Right cardiac atrium (tissue), 5 donors: ENCODE measurements at regions of chrX and their contacts with region 1.

Region 1: DNA sequence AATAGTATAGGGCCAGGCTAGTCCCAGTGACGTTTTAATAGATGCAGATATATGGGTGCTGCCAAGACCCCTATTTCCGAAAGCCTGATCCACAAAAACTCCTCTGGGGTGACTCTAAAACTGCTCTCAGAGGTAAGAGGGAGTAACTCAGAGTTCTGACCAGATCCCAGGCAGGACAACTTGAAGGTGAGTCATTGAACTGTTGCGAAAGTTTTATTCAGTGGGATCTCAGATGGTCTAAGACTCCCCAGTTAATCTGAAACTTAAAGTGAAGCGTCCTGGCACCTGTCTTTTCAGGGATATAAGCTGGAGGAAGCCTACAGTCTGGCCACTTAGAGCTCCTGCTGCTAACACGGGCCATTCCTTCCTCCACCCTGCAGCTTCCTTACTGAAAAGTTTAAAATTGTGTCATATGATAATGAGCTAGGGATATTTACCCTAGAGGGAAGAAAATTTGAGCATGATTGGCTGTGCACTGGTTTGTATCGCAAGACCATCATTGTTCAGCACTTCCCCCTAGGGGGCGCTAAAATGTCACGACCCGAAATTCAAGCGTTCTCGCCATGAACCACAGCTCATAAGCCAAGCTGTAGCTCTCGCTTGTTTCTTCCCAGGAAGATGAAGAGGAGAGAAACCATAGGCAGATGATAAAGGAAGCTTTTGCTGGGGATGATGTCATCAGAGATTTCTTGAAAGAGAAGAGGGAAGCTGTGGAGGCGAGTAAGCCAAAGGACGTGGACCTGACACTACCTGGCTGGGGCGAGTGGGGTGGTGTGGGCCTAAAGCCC is 19.5 kb downstream of the UTP14A start:
- DNase-seq: peak; percentile 70 to 80 (median 75)
- ATAC-seq: peak; percentile 79 to 81
- H3K4me3 ChIP-seq: no peak overlapping the region
- H3K27ac ChIP-seq: no peak overlapping the region
- H3K4me1 ChIP-seq: no peaks in the 10 kb centered on the region
- H3K27me3 ChIP-seq: no peaks in the 10 kb centered on the region

Region 2: GRCh38 chrX:130024127-130024526 is 98.6 kb after region 1 on chrX:
- intact Hi-C with region 1: loop called in 1 of 4 experiments (anchors 2 kb)
- DNase-seq: peak; percentile 82 to 91 (median 89)
- ATAC-seq: peak; percentile 95 to 96
- H3K4me3 ChIP-seq: no peak overlapping the region
- H3K27ac ChIP-seq: no peak overlapping the region
- H3K4me1 ChIP-seq: peaks cover 4% of the 10 kb centered on the region
- H3K27me3 ChIP-seq: no peaks in the 10 kb centered on the region

Region 3: DNA sequence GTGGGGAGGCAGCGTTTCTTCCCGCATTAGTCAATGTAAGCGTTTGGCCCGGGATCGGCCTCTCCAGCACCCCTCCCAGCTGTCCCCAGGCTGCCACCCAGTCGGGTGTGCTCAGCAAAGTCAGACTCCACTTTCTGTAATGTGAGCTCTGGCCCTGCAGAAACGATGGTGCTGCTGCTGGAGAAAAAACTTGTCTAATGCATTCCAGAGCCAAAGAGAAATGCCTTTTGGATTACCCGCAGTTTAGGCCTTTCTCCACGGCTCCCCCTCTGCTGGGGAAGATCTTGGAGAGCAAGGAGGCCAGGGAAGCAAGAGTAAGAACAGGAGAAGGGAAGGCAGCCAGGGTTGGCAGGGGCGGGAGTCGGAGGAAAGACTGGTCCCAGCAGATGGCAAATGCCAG is 129.6 kb after region 1 on chrX:
- intact Hi-C with region 1: loop called in 3 of 4 experiments (anchors 2 to 10 kb)
- DNase-seq: peak; percentile 32 to 69 (median 65)
- ATAC-seq: peak; percentile 39 to 78
- H3K4me3 ChIP-seq: no peak overlapping the region
- H3K27ac ChIP-seq: no peak overlapping the region
- H3K4me1 ChIP-seq: no peaks in the 10 kb centered on the region
- H3K27me3 ChIP-seq: no peaks in the 10 kb centered on the region

Region 4: GRCh38 chrX:130060122-130061069 is 134.9 kb after region 1 on chrX:
- intact Hi-C with region 1: loop called in 3 of 4 experiments (anchors 2 to 10 kb)
- DNase-seq: peak; percentile 74 to 93 (median 90)
- ATAC-seq: peak; percentile 91 to 95
- H3K4me3 ChIP-seq: peak overlapping the region; percentile 71
- H3K27ac ChIP-seq: peak overlapping the region; percentile 39
- H3K4me1 ChIP-seq: no peaks in the 10 kb centered on the region
- H3K27me3 ChIP-seq: no peaks in the 10 kb centered on the region

Region 5: GRCh38 chrX:130578906-130579305 is 653.4 kb after region 1 on chrX:
- intact Hi-C with region 1: no loop called
- DNase-seq: no peak
- ATAC-seq: no peak
- H3K4me3 ChIP-seq: no peak overlapping the region
- H3K27ac ChIP-seq: no peak overlapping the region
- H3K4me1 ChIP-seq: no peaks in the 10 kb centered on the region
- H3K27me3 ChIP-seq: no peaks in the 10 kb centered on the region